Activated CD8-positive, alpha-beta T cell treated with anti-CD3 and anti-CD28 coated beads for 36 hours (primary cell): ENCODE measurements at regions of chr2 and their contacts with region 1.

Region 1: DNA sequence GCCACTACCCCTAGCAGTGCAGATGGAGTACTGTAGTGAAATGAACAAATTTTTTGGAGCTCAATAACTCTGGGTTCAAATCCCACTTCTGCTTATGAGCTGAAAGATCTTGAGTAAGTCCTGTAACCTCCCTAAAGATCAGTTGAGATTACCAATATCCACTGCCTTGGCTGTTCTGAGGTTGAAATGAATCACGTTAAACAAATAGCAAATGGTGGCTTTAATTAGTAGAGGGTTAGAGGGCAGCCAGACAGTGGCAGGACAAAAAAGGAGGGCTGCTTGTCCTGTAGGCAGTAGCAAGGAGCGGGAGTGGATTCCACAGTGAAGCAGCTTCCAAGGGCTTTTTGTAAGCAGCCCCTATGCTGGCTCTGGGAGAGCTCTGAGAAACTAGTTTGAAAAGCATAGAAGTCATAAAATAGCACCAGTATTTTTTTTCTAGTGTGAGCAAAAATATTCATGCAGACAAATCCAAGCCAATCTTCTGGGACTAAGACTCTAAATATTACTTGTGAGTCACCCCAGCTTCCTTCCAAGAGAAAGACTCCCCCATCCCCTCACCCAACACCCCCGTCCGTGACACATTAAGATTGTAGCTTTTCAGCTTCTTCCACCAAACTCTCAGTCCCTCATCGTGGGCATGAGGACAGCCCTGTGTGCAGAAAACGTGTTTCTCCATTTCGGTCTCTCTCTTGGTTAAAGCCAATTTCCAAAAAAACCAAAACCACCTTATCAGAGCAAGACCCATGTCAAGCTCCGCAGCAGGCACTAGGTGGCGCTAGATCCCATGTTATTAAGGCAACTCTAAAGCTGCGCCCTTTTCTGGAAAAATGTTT is 123.5 kb upstream of the LGALSL start:
- DNase-seq: peak; percentile 84
- ATAC-seq: no peak
- H3K4me3 Mint-ChIP-seq: peak overlapping the region; percentile 41
- H3K27ac Mint-ChIP-seq: peak overlapping the region; percentile 27
- H3K4me1 Mint-ChIP-seq: peaks cover 39% of the 10 kb centered on the region
- H3K27me3 Mint-ChIP-seq: no peaks in the 10 kb centered on the region
- CTCF ChIP-seq: peak; percentile 93

Region 2: DNA sequence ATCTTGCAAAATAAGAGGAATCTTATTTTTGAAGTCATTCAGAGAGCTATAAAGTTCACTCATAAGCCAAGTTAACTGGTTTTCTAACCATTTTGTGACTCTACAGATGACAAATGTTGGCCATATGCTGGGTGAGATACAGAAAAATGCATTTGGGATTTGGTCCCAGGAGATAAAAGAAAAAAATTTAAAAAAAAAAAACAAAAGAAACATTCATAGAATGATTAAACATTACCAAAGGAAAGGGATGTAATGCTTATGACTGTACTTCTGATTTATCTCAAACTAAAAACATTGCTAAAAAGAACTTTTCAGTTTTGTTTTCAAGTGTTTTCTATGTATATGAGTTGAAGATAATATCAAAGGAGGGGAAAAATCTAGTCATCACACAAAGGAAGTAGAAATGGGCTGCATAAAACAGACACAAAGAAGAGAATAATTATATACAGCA is 229.3 kb before region 1 on chr2:
- CTCF ChIA-PET with region 1: interaction called, 13 read pairs
- POLR2A ChIA-PET with region 1: interaction called, 8 read pairs
- intact Hi-C with region 1: no loop called
- DNase-seq: no peak
- ATAC-seq: peak; percentile 80
- H3K4me3 Mint-ChIP-seq: peak overlapping the region; percentile 42
- H3K27ac Mint-ChIP-seq: peak overlapping the region; percentile 86
- H3K4me1 Mint-ChIP-seq: peaks cover 56% of the 10 kb centered on the region
- H3K27me3 Mint-ChIP-seq: no peaks in the 10 kb centered on the region
- CTCF ChIP-seq: no peak

Region 3: GRCh38 chr2:64214281-64215115 is 116.0 kb before region 1 on chr2:
- CTCF ChIA-PET with region 1: interaction called, 39 read pairs
- POLR2A ChIA-PET with region 1: interaction called, 30 read pairs
- intact Hi-C with region 1: loop called (anchors 1 kb)
- DNase-seq: peak; percentile 45
- ATAC-seq: peak; percentile 67
- H3K4me3 Mint-ChIP-seq: peak overlapping the region; percentile 63
- H3K27ac Mint-ChIP-seq: peak overlapping the region; percentile 97
- H3K4me1 Mint-ChIP-seq: peaks cover 55% of the 10 kb centered on the region
- H3K27me3 Mint-ChIP-seq: no peaks in the 10 kb centered on the region
- CTCF ChIP-seq: no peak

Region 4: GRCh38 chr2:64311948-64312621 is 18.4 kb before region 1 on chr2:
- CTCF ChIA-PET with region 1: interaction called, 40 read pairs
- POLR2A ChIA-PET with region 1: interaction called, 3 read pairs
- intact Hi-C with region 1: no loop called
- DNase-seq: no peak
- ATAC-seq: no peak
- H3K4me3 Mint-ChIP-seq: no peak overlapping the region
- H3K27ac Mint-ChIP-seq: no peak overlapping the region
- H3K4me1 Mint-ChIP-seq: no peaks in the 10 kb centered on the region
- H3K27me3 Mint-ChIP-seq: no peaks in the 10 kb centered on the region
- CTCF ChIP-seq: no peak

Region 5: GRCh38 chr2:64453770-64454385 is 123.4 kb after region 1 on chr2 and contains the start of gene LGALSL:
- CTCF ChIA-PET with region 1: interaction called, 17 read pairs
- POLR2A ChIA-PET with region 1: no interaction called
- intact Hi-C with region 1: no loop called
- DNase-seq: no peak
- ATAC-seq: peak; percentile 78
- H3K4me3 Mint-ChIP-seq: peak within 1 kb of the TSS; percentile 77
- H3K27ac Mint-ChIP-seq: peak within 1 kb of the TSS; percentile 74
- H3K4me1 Mint-ChIP-seq: peaks cover 9% of the 10 kb centered on the region
- H3K27me3 Mint-ChIP-seq: peaks cover 4% of the 10 kb centered on the region
- CTCF ChIP-seq: no peak
- total RNA-seq, gene LGALSL: 3.8 to 3.9 TPM

Region 6: DNA sequence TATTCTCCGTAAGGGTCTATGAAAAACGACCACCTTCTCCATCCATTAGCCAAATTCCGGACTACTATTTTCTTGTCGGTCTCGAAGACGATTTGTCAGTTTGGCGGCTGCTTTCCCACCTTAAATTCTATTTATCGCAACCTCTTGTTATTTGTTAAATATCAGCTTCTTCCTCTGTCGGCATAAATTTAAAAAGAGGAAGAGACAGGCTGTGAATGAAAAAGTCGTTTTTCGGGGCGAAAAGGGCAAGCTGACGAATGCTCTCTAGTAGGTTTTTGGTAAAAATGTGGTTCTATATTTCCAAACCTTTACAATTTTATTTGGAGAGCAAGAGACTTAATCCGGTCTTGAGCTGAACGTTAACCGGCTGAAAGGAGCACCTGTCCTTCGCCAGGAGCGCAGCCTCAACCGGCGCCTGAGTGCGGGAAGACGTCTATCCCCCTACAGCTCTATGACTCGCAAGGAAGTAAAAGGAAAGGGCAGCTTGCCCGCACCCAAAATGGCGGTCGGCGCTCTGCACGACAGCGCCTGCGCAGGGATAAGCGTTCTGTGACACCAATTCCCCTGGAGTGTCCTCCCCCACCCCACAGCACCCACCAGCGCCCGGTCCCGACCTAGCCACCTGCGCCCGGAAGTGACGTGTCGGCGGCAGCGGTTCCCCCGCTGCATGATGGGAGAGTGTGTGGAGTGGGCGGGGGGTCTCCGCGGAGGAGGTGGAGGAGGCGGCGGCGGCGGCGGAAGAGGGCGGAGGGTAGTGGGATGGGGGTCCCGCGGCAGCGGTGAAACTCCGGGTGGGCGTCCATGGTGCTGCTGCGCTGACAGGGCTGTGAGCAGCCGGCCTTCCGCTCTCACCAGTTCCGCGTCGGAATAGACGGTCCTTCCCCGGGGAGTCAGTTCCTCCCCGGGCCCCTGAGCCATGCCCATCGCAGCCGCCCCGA is 193.4 kb after region 1 on chr2 and contains the start of gene AFTPH:
- CTCF ChIA-PET with region 1: interaction called, 58 read pairs
- POLR2A ChIA-PET with region 1: interaction called, 6 read pairs
- intact Hi-C with region 1: no loop called
- DNase-seq: peak; percentile 99
- ATAC-seq: peak; percentile 93
- H3K4me3 Mint-ChIP-seq: peak within 1 kb of the TSS; percentile 99
- H3K27ac Mint-ChIP-seq: peak within 1 kb of the TSS; percentile 100
- H3K4me1 Mint-ChIP-seq: peaks cover 33% of the 10 kb centered on the region
- H3K27me3 Mint-ChIP-seq: no peaks in the 10 kb centered on the region
- CTCF ChIP-seq: no peak
- total RNA-seq, gene AFTPH: 30.6 to 31.1 TPM

Region 7: DNA sequence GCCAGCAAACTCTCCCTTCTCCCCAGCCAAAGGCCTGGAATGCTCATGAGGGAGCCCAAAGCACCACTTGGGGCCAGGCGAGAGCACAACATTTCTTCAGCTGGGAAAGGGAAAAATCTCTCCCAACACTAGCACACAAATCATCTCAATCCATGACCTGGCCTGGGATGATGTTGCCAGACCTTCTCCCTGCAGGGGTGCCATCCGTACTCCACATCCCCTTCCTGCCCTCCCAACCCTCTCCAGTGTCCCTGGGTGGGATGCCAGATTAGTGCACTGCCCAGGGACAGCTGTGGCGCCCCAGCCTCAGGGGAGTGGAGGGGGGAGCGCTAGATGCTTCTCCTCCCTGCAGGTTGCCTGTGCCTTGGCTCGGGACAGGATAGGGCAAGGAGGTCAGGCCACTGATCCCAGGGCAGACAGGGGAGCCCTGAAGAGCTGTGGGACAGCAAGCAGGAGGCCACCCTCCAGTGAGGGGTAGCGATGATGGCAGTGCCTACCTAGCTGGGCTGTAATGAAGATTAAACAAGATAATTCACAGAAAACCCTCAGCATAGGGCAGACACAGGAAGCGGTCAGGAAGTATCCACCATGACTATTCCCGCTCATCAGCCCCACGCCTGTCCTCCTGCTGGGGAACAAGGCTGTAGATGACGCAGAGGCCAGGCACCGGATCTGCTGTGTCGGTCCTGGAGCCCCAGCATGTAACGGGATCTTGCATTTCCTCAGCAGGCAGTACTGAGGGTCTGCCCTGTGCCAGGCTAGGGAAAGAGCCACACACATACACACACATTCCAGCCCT is 292.1 kb after region 1 on chr2:
- CTCF ChIA-PET with region 1: no interaction called
- POLR2A ChIA-PET with region 1: no interaction called
- intact Hi-C with region 1: no loop called
- DNase-seq: no peak
- ATAC-seq: no peak
- H3K4me3 Mint-ChIP-seq: no peak overlapping the region
- H3K27ac Mint-ChIP-seq: no peak overlapping the region
- H3K4me1 Mint-ChIP-seq: no peaks in the 10 kb centered on the region
- H3K27me3 Mint-ChIP-seq: no peaks in the 10 kb centered on the region
- CTCF ChIP-seq: no peak